ENCODE measurements at regions of chr4 and their contacts with region 1.

Region 1: GRCh38 chr4:113394730-113395530 is 345.5 kb downstream of the ANK2 start:
- DNase-seq: peak; percentile 66
- ATAC-seq: peak; percentile 99
- H3K4me3 ChIP-seq: no peak overlapping the region
- H3K27ac ChIP-seq: no peak overlapping the region
- H3K4me1 ChIP-seq: no peaks in the 10 kb centered on the region
- H3K27me3 ChIP-seq: no peaks in the 10 kb centered on the region
- CTCF ChIP-seq: peak; percentile 62 to 94 (median 70); a peak in 5 of 6 replicates
- EP300 ChIP-seq: no peak
- POLR2A ChIP-seq: no peak
- RAD21 ChIP-seq: peak; percentile 98

Region 2: DNA sequence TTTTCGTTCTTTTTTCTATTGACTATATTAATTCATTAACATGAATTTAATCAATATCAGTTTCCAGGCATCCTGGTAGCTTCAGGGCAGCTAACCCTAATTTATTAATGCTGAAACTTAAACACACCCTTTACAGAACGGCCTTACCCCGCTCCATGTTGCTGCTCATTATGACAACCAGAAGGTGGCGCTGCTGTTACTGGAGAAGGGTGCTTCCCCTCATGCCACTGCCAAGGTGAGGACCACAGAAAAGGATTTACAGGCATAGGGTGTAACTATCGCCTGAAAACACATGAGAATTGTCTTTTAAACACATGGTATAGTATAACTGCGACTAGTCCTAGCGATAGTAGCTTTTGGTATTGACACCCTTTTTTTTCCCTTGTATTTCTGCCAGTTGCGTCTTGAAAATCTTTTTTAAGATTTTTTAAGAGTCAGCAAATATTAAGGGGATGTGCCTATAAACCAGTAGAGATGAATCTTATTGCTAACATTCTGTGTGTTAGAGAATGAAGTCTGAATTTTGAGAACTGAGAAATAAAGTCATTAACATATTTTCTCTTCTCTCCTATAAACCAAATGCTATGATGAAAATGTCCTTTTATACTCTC is 116.5 kb before region 1 on chr4:
- CTCF ChIA-PET with region 1: interaction called, 7 read pairs
- POLR2A ChIA-PET with region 1: no interaction called
- RAD21 ChIA-PET with region 1: interaction called, 7 read pairs
- SMC1A ChIA-PET with region 1: interaction called, 9 read pairs
- in situ Hi-C with region 1: no loop called
- intact Hi-C with region 1: loop called (anchors 2 kb)
- DNase-seq: peak; percentile 23
- ATAC-seq: peak; percentile 100
- H3K4me3 ChIP-seq: no peak overlapping the region
- H3K27ac ChIP-seq: no peak overlapping the region
- H3K4me1 ChIP-seq: no peaks in the 10 kb centered on the region
- H3K27me3 ChIP-seq: no peaks in the 10 kb centered on the region
- CTCF ChIP-seq: peak; percentile 86 to 88 (median 88)
- EP300 ChIP-seq: no peak
- POLR2A ChIP-seq: no peak
- RAD21 ChIP-seq: peak; percentile 88

Region 3: GRCh38 chr4:113524505-113525186 is 129.7 kb after region 1 on chr4:
- CTCF ChIA-PET with region 1: no interaction called
- POLR2A ChIA-PET with region 1: no interaction called
- RAD21 ChIA-PET with region 1: no interaction called
- SMC1A ChIA-PET with region 1: no interaction called
- in situ Hi-C with region 1: no loop called
- intact Hi-C with region 1: loop called (anchors 5 kb)
- DNase-seq: no peak
- ATAC-seq: peak; percentile 72
- H3K4me3 ChIP-seq: no peak overlapping the region
- H3K27ac ChIP-seq: peak overlapping the region; percentile 38; the same call in 1 of the 2 replicates
- H3K4me1 ChIP-seq: peaks cover 12% of the 10 kb centered on the region
- H3K27me3 ChIP-seq: no peaks in the 10 kb centered on the region
- CTCF ChIP-seq: no peak
- EP300 ChIP-seq: no peak
- POLR2A ChIP-seq: no peak
- RAD21 ChIP-seq: no peak

Region 4: DNA sequence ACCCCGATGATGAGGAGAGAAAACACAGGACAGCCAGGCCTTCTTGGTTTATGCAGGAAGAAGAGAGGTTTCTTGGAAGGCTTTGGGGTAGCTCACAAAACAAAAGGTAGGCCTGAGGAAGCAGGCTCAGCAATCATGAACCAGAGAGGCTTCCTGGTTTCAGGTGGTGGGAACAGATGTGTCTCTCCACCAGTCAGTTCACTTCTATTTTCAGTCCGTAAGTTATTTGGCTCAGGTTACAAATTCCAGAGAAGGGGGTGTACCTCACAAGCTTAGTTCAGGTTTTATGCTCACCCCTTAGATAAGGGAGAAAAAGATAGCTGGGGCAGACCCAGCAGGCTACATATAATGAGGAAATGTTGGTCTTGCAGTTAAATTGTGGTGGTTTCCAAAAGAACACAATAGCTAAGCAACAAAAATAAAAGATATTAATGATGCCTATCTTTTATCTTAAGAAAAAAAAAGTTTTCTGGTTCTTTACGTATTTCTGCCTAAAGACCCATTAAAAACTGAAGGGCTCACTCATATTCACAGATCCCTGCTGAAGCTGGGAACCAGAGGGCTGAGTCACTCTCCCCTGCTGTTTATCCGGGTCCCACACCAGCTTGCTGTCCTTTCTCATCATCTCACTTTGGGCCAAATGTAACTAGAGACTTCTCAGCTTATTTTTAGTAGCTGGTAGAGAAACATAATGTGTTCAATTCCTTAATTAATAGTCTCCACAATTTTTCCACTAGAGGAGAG is 189.6 kb after region 1 on chr4:
- CTCF ChIA-PET with region 1: no interaction called
- POLR2A ChIA-PET with region 1: no interaction called
- RAD21 ChIA-PET with region 1: no interaction called
- SMC1A ChIA-PET with region 1: no interaction called
- in situ Hi-C with region 1: no loop called
- intact Hi-C with region 1: no loop called
- DNase-seq: no peak
- ATAC-seq: no peak
- H3K4me3 ChIP-seq: no peak overlapping the region
- H3K27ac ChIP-seq: 0 out of 2 replicates have a peak overlapping the region, but pooled peaks have one; percentile 10
- H3K4me1 ChIP-seq: peaks cover 6% of the 10 kb centered on the region; the same call in 1 of the 2 replicates
- H3K27me3 ChIP-seq: no peaks in the 10 kb centered on the region
- CTCF ChIP-seq: no peak
- EP300 ChIP-seq: no peak
- POLR2A ChIP-seq: no peak
- RAD21 ChIP-seq: no peak

Region 5: DNA sequence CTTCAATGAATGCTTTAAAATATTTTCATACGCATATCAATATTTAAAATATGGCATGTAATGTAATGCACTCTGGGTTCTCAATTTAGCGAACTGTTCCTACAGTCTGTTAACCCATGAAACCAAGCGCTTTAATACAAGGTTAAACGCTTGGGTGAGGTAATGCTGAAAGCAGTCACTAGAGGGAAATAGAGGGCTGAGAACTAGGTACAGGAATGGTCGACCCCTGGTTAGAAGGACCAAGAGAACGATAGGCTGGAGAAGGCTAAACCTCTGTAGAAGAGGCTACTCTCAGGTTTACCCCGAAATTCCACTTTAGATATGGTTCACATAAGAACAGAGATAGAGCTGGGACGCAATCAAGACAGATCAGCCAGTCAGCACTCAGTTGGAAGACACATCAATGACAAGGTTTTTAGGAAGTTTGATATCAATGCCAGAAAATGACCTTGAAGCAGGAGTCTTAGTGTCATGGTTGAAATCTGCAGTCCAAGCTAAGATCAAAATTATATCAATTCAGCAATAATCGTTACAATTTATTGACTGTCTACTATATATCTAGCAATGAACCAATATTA is 557.6 kb after region 1 on chr4:
- CTCF ChIA-PET with region 1: interaction called, 29 read pairs
- POLR2A ChIA-PET with region 1: no interaction called
- RAD21 ChIA-PET with region 1: interaction called, 4 read pairs
- SMC1A ChIA-PET with region 1: interaction called, 24 read pairs
- in situ Hi-C with region 1: no loop called
- intact Hi-C with region 1: loop called (anchors 1 kb)
- DNase-seq: peak; percentile 12
- ATAC-seq: peak; percentile 94
- H3K4me3 ChIP-seq: no peak overlapping the region
- H3K27ac ChIP-seq: no peak overlapping the region
- H3K4me1 ChIP-seq: no peaks in the 10 kb centered on the region
- H3K27me3 ChIP-seq: no peaks in the 10 kb centered on the region
- CTCF ChIP-seq: peak; percentile 69 to 84 (median 71)
- EP300 ChIP-seq: no peak
- POLR2A ChIP-seq: no peak
- RAD21 ChIP-seq: peak; percentile 85

Region 6: DNA sequence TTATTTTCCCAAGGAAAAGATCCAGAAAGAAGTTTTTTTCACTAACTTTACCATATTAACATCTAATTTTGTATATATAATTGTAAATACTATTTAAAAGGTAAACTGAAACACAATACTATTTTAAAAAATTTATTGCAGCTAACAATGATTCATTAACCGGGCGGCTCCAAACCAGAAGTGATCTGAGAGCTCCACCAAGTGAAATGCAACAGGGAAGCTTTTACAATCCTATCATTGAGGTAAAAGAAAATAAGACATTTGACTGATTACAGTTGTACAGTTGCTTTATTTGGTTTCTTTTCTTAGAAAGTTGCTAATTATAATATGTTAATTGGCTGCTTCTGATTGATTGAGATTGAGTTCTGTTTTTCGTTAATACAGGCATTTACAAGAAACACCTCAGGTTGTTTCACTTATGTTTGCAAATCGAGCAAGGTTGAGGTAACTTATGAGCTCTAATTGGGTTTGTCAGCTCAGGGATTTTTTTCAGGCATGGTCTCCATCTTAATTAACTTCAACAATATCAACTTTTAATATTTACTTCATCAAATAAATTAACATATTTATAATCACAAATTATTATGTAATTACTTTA is 983.5 kb after region 1 on chr4:
- CTCF ChIA-PET with region 1: interaction called, 46 read pairs
- POLR2A ChIA-PET with region 1: interaction called, 3 read pairs
- RAD21 ChIA-PET with region 1: interaction called, 32 read pairs
- SMC1A ChIA-PET with region 1: interaction called, 41 read pairs
- in situ Hi-C with region 1: loop called (anchors 5 kb)
- intact Hi-C with region 1: no loop called
- DNase-seq: no peak
- ATAC-seq: 0 out of 3 replicates have a peak, but pooled peaks have one; percentile 26
- H3K4me3 ChIP-seq: no peak overlapping the region
- H3K27ac ChIP-seq: no peak overlapping the region
- H3K4me1 ChIP-seq: no peaks in the 10 kb centered on the region
- H3K27me3 ChIP-seq: no peaks in the 10 kb centered on the region
- CTCF ChIP-seq: peak in 1 of 3 experiments; percentile 45; a peak in 1 of 6 replicates
- EP300 ChIP-seq: no peak
- POLR2A ChIP-seq: no peak
- RAD21 ChIP-seq: peak; percentile 35; the same call in 1 of the 2 replicates

Region 7: DNA sequence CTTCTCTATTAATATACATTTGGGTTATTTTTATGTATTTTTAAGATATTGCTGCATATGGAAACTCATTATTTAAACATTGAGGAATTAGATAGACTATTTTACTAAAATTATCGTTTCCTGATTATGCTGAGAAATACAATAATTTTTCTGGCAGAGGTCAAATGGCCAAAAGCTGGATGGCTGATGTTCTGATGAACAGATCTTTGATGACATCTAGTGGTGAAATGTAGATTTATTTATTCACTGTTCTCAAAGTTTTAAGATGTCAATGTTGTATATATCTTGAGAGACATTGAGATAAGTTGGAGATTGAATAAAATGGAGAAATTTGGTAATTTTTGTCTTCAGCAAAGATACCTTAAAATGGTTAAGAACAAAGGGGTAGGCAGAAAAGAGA is 1299.8 kb after region 1 on chr4:
- CTCF ChIA-PET with region 1: interaction called, 6 read pairs
- POLR2A ChIA-PET with region 1: no interaction called
- RAD21 ChIA-PET with region 1: no interaction called
- SMC1A ChIA-PET with region 1: no interaction called
- in situ Hi-C with region 1: loop called (anchors 25 kb)
- intact Hi-C with region 1: loop called (anchors 5 kb)
- DNase-seq: peak; percentile 11
- ATAC-seq: peak; percentile 48
- H3K4me3 ChIP-seq: no peak overlapping the region
- H3K27ac ChIP-seq: no peak overlapping the region
- H3K4me1 ChIP-seq: peaks cover 14% of the 10 kb centered on the region
- H3K27me3 ChIP-seq: no peaks in the 10 kb centered on the region
- CTCF ChIP-seq: peak; percentile 43 to 58 (median 44); a peak in 4 of 6 replicates
- EP300 ChIP-seq: no peak
- POLR2A ChIP-seq: no peak
- RAD21 ChIP-seq: peak; percentile 80